ENCODE measurements at regions of chr10 and their contacts with region 1.

Region 1: DNA sequence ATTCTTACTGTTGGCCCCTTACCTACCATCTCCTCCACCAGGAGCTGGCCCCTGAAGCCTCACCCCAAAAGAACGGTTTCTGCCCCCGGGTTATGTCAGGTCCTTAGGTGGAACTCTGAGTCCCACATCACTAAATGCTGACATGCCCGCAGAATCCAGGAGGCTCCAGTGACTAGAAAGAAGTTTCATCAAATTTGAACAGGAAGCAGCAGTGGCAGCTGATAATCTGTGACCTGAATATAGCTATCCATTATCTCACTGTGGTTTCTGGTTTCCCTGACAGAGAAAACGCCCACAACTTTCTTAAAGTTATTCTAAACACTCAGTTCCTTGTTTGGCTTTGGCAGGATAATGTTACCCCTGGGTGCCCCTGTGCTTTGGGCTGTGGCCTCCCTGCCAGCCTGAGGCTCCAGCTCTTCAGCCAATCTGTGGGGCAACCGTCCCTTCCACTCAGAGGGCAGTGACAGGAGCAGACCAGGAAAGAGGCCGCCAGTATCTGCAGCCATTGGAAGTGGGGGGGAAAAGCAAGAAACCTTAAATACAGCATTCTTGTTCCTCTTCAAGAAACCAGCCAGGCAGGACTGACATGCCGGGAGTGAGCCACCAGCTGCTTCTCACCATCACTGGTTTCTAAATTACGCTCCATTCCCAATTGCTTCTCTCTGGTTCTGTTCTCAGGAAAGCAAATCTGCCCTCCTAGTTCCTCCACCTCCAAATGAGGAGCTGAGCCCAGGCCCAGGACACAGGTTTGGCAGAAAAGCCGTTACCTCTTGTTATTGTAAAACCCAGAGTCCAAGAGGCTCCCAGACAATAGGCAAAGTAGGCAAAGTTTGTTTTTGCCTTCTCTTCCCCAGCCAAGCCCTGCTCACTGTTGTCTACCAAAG is 41.2 kb upstream of the VCL start:
- H3K4me3 Mint-ChIP-seq: peak overlapping the region; percentile 55
- H3K27ac Mint-ChIP-seq: peak overlapping the region; percentile 96
- H3K4me1 Mint-ChIP-seq: peaks cover 61% of the 10 kb centered on the region
- H3K27me3 Mint-ChIP-seq: no peaks in the 10 kb centered on the region

Region 2: DNA sequence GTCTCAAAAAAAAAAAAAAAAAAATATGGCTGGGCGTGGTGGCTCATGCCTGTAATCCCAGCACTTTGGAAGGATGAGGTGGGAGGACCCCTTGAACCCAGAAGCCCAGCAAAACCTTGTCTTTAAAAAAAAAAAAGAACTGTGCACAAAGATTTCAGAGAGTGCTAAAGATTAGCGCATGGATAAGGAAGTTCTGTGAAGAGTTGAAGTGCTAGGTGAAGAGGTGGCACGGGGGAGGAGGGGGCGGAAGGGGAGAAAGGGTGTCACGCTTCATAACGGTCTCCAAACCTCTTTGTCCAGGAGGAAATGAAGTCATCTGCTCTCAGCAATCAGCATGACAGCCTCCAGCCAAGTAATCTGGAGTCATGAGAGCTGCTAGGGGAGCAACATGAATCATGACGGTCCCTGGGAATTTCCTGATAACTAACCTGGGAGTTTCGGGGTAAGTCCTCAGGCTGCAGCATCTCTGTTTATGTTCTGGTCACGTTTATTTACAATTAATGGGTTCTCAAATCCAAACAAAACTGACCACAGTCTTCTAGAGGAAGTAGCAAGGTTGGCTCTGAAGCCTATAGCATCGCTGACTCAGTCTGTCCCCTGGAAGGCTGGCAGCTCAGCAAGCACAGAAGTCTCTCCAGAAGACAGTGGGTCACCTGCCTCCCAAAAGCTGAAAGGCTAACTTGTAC is 47.7 kb before region 1 on chr10:
- intact Hi-C with region 1: loop called (anchors 2 kb)
- H3K4me3 Mint-ChIP-seq: peak overlapping the region; percentile 72
- H3K27ac Mint-ChIP-seq: peak overlapping the region; percentile 93
- H3K4me1 Mint-ChIP-seq: peaks cover 75% of the 10 kb centered on the region
- H3K27me3 Mint-ChIP-seq: no peaks in the 10 kb centered on the region

Region 3: GRCh38 chr10:73997787-73998622 is 41.3 kb after region 1 on chr10 and contains the start of gene VCL:
- intact Hi-C with region 1: loop called (anchors 2 kb)
- H3K4me3 Mint-ChIP-seq: peak within 1 kb of the TSS; percentile 95
- H3K27ac Mint-ChIP-seq: peak within 1 kb of the TSS; percentile 84
- H3K4me1 Mint-ChIP-seq: peaks cover 73% of the 10 kb centered on the region
- H3K27me3 Mint-ChIP-seq: no peaks in the 10 kb centered on the region

Measured in dendritic cell treated with granulocyte-macrophage colony-stimulating factor and Interleukin-4, amounts not matched to agents 40 ng/mL and 50 ng/mL, for 4 days (primary cell).